Heart left ventricle (tissue), 16 donors: ENCODE measurements at regions of chr4 and their contacts with region 1.

Region 1: GRCh38 chr4:152112887-152113286 is 352.1 kb upstream of the GATB start:
- DNase-seq: no peak
- ATAC-seq: no peak
- H3K4me3 ChIP-seq: no peak overlapping the region
- H3K27ac ChIP-seq: no peak overlapping the region
- H3K4me1 ChIP-seq: peaks cover 5 to 52% (median 24%) of the 10 kb centered on the region in 12 donors
- H3K27me3 ChIP-seq: no peaks in the 10 kb centered on the region
- CTCF ChIP-seq: no peak
- POLR2A ChIP-seq: no peak

Region 2: GRCh38 chr4:152126238-152126637 is 13.4 kb after region 1 on chr4:
- intact Hi-C with region 1: no loop called
- DNase-seq: no peak
- ATAC-seq: no peak
- H3K4me3 ChIP-seq: no peak overlapping the region
- H3K27ac ChIP-seq: no peak overlapping the region
- H3K4me1 ChIP-seq: no peaks in the 10 kb centered on the region
- H3K27me3 ChIP-seq: no peaks in the 10 kb centered on the region
- CTCF ChIP-seq: no peak
- POLR2A ChIP-seq: no peak

Region 3: GRCh38 chr4:152200511-152201333 is 87.8 kb after region 1 on chr4:
- intact Hi-C with region 1: loop called in 1 of 10 experiments (anchors 5 kb)
- DNase-seq: no peak
- ATAC-seq: no peak
- H3K4me3 ChIP-seq: no peak overlapping the region
- H3K27ac ChIP-seq: no peak overlapping the region
- H3K4me1 ChIP-seq: peaks cover 0 to 27% (median 13%) of the 10 kb centered on the region in 12 donors
- H3K27me3 ChIP-seq: no peaks in the 10 kb centered on the region
- CTCF ChIP-seq: no peak
- POLR2A ChIP-seq: no peak

Region 4: DNA sequence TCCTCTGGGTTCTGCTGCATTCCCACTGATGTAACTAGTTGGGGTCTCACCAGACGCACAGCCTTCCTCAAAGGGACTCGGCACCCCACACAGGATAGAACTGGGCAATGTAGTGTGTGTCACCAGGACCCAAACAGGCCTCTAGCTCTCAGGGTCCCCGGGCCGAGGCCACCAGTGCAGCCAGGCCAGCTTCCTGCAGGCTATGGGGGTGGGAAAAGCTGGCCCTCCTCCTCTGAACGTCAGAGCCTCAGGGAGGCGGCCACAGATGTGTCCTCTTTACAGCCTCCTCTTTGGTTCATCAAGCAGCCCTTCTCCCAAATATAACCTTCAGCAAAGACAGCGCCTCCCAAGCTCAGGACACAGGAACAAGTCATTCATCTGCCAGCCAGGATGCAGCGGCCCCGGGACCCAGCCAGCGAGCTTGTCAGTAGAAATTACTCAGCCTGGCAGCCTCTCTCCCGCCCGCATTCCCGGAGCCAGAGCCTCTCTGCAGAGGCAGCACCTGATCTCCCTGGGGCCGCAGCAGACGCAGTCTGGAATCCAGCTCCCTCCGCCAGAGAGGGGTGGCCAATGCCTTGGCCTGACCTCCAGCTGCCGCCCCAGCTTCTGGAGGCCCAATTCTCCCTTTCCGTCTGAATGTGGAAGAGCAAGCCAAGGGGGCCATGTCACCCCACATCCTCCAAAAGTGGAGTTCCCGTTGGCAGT is 134.5 kb after region 1 on chr4:
- intact Hi-C with region 1: loop called in 3 of 10 experiments (anchors 5 to 10 kb)
- DNase-seq: peak; percentile 33 to 73 (median 65)
- ATAC-seq: peak; percentile 44 to 72 (median 66)
- H3K4me3 ChIP-seq: no peak overlapping the region
- H3K27ac ChIP-seq: peak overlapping the region in 1 of 12 donors; percentile 10
- H3K4me1 ChIP-seq: peaks cover 0 to 20% (median 13%) of the 10 kb centered on the region in 12 donors
- H3K27me3 ChIP-seq: no peaks in the 10 kb centered on the region
- CTCF ChIP-seq: no peak
- POLR2A ChIP-seq: no peak

Region 5: DNA sequence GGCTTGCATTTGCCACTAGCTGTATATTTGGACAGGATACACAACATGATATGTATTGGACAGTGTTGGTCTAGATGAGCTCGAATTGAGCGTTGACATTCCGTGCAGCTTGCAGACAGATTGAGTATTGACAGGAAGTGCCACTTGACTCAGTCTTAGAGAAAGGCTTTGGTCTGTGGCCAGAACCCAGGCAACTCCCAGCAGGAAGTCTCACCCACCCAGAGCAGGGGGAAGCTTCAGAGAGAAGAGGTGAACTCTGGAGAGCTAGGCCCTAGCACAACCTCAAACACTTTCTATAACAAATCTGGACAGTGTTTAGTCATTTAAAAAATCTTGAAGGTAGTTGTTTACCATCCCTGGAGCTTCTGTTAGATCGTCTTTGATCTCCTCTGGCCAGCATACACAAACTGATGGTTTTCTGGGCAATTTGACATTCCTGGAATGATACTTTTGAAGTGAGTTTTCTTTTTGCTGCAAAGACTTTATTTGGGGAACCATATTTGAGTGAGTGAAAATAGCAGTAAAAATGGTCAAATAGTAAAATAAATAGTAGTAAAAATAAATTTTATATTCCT is 142.6 kb after region 1 on chr4:
- intact Hi-C with region 1: loop called in 2 of 10 experiments (anchors 10 kb)
- DNase-seq: peak in 1 of 5 donors; percentile 46
- ATAC-seq: peak in 3 of 4 donors; percentile 51 to 63 (median 60)
- H3K4me3 ChIP-seq: no peak overlapping the region
- H3K27ac ChIP-seq: peak overlapping the region in 2 of 12 donors; percentile 7 to 41
- H3K4me1 ChIP-seq: peaks cover 0 to 34% (median 16%) of the 10 kb centered on the region in 12 donors
- H3K27me3 ChIP-seq: no peaks in the 10 kb centered on the region
- CTCF ChIP-seq: no peak
- POLR2A ChIP-seq: no peak